ENCODE measurements at regions of chr22 and their contacts with region 1.

Region 1: GRCh38 chr22:18091916-18092526 is 14.2 kb downstream of the PEX26 start:
- DNase-seq: peak; percentile 43
- ATAC-seq: peak; percentile 77
- H3K4me3 ChIP-seq: peak overlapping the region; percentile 30; the same call in 1 of the 2 replicates
- H3K27ac ChIP-seq: peak overlapping the region; percentile 70
- H3K4me1 ChIP-seq: peaks cover 7% of the 10 kb centered on the region; the same call in 1 of the 2 replicates
- H3K27me3 ChIP-seq: no peaks in the 10 kb centered on the region
- CTCF ChIP-seq: no peak
- POLR2A ChIP-seq: no peak
- RAD21 ChIP-seq: no peak

Region 2: GRCh38 chr22:18133452-18133851 is 41.4 kb after region 1 on chr22:
- CTCF ChIA-PET with region 1: no interaction called
- POLR2A ChIA-PET with region 1: no interaction called
- dilution Hi-C with region 1: no loop called
- in situ Hi-C with region 1: no loop called
- intact Hi-C with region 1: loop called (anchors 5 kb)
- DNase-seq: no peak
- ATAC-seq: no peak; the same call in 1 of the 2 replicates
- H3K4me3 ChIP-seq: no peak overlapping the region
- H3K27ac ChIP-seq: no peak overlapping the region
- H3K4me1 ChIP-seq: no peaks in the 10 kb centered on the region
- H3K27me3 ChIP-seq: no peaks in the 10 kb centered on the region
- CTCF ChIP-seq: no peak
- POLR2A ChIP-seq: no peak
- RAD21 ChIP-seq: no peak

Region 3: GRCh38 chr22:18148293-18148965 is 56.4 kb after region 1 on chr22:
- CTCF ChIA-PET with region 1: no interaction called
- POLR2A ChIA-PET with region 1: no interaction called
- dilution Hi-C with region 1: no loop called
- in situ Hi-C with region 1: no loop called
- intact Hi-C with region 1: loop called (anchors 5 kb)
- DNase-seq: no peak
- ATAC-seq: no peak
- H3K4me3 ChIP-seq: no peak overlapping the region
- H3K27ac ChIP-seq: no peak overlapping the region
- H3K4me1 ChIP-seq: peaks cover 3% of the 10 kb centered on the region; the same call in 1 of the 2 replicates
- H3K27me3 ChIP-seq: no peaks in the 10 kb centered on the region
- CTCF ChIP-seq: no peak
- POLR2A ChIP-seq: no peak
- RAD21 ChIP-seq: no peak

Region 4: DNA sequence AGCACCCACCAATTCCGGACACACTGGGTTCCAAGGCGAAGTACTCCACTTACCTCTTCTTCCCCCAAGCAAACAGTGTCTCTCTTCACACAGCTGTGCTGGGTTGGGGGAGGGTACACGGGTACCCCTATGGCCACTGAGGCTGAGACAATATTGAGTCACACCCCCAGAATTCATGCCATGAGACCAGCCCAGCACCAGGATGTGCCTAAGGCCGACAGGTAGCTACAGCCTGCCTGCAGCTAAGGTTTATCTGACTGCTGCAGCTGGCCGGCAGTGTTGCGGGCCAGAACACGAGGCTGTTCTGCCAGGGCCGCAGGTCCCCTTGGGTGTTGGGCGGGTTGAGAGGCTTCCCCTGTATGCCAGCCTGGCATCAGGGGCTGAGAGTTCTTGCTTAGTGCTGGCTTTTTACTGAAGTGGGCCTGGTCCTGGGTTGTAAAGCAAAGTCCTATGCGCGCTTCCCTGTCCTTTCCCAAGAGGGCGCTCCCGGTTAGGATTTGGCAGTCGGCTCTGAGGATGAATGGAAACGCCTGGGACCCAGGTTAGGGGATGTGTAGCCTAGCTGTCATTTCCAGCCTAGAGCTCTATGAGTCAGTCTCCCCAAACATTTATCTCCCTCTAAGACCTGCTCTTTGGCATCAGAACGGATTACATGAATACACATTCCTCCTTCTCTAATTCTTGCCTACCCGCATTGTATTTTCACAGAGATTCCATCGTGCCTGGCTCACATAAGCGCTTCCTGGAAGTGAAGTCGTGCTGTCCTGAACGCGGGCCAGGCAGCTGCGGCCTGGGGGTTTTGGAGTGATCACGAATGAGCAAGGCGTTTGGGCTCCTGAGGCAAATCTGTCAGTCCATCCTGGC is 65.1 kb after region 1 on chr22:
- CTCF ChIA-PET with region 1: no interaction called
- POLR2A ChIA-PET with region 1: no interaction called
- dilution Hi-C with region 1: no loop called
- in situ Hi-C with region 1: no loop called
- intact Hi-C with region 1: loop called (anchors 2 kb)
- DNase-seq: peak; percentile 99
- ATAC-seq: peak; percentile 92
- H3K4me3 ChIP-seq: no peak overlapping the region
- H3K27ac ChIP-seq: peak overlapping the region; percentile 88
- H3K4me1 ChIP-seq: peaks cover 16% of the 10 kb centered on the region
- H3K27me3 ChIP-seq: no peaks in the 10 kb centered on the region
- CTCF ChIP-seq: peak; percentile 99
- POLR2A ChIP-seq: peak; percentile 56; the same call in 1 of the 2 replicates
- RAD21 ChIP-seq: peak; percentile 99